ENCODE measurements at regions of chr9 and their contacts with region 1.

Region 1: DNA sequence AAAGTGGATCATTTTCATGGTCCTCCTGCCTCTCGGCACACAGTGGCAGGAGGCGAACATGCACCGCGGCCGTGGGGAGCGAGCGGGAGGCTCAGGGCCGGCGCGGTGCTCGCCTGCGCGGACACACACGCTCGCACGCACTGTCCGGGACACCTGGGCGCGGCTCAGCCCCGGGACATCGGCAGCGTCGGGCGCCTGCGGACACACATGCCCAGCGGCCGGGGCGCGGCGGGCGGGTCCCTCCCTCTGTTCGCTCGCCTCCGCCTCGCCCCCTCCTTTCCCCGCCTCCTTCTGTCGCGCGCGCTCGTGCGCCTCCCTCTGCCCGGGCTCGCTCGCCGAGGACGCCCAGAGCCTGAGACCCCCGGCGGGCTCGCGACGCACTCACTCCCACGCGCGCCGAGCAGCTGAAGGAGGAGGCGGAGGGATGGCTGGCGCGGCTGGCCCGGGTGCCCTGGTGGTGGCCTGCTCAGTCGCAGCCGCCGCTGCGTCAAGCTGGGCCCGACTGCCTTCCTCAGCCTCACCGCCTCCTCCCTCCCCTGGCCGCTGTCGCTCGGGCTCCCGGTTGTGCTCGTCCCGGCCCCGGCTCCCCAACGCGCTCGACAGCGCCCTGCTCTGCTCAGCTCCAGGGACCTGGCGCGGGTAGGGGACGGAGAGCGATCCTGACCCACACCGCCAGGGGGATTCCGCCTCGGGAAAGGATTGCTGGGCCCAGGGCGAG is at the start of gene FRMD3:
- H3K4me3 Mint-ChIP-seq: peak within 1 kb of the TSS; percentile 84
- H3K27ac Mint-ChIP-seq: peak within 1 kb of the TSS; percentile 67
- H3K4me1 Mint-ChIP-seq: peaks cover 7% of the 10 kb centered on the region
- H3K27me3 Mint-ChIP-seq: peaks cover 42% of the 10 kb centered on the region

Region 2: DNA sequence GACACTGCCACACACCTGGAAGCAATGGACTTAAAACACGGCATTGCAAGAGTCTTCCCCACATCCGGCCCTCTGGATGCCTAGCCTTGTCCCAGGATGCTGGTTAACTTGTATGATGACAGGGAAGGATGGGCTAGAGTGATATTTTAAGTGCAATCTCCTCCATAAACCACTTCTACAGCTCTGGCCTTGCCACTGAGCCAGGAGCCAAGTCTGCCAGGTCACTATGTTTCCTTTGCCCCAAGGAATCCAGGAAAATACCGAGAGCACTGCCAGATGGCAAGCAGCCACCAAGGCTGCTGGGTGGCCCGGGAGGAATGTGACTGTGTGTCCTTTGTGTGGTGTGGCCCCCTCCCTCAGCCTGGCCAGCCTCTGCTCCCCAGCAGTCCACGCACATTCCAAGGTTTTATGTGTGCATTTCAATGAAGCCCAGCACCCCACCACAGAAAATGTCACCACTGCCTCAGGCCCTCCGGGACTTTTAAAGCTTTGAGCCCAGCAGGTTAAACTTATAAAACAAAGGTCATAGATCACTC is 106.2 kb before region 1 on chr9:
- intact Hi-C with region 1: loop called (anchors 10 kb)
- H3K4me3 Mint-ChIP-seq: no peak overlapping the region
- H3K27ac Mint-ChIP-seq: peak overlapping the region; percentile 66
- H3K4me1 Mint-ChIP-seq: peaks cover 49% of the 10 kb centered on the region
- H3K27me3 Mint-ChIP-seq: peaks cover 4% of the 10 kb centered on the region

Region 3: GRCh38 chr9:83473488-83473971 is 64.8 kb before region 1 on chr9:
- intact Hi-C with region 1: loop called (anchors 10 kb)
- H3K4me3 Mint-ChIP-seq: peak overlapping the region; percentile 71
- H3K27ac Mint-ChIP-seq: peak overlapping the region; percentile 86
- H3K4me1 Mint-ChIP-seq: peaks cover 43% of the 10 kb centered on the region
- H3K27me3 Mint-ChIP-seq: no peaks in the 10 kb centered on the region

Region 4: DNA sequence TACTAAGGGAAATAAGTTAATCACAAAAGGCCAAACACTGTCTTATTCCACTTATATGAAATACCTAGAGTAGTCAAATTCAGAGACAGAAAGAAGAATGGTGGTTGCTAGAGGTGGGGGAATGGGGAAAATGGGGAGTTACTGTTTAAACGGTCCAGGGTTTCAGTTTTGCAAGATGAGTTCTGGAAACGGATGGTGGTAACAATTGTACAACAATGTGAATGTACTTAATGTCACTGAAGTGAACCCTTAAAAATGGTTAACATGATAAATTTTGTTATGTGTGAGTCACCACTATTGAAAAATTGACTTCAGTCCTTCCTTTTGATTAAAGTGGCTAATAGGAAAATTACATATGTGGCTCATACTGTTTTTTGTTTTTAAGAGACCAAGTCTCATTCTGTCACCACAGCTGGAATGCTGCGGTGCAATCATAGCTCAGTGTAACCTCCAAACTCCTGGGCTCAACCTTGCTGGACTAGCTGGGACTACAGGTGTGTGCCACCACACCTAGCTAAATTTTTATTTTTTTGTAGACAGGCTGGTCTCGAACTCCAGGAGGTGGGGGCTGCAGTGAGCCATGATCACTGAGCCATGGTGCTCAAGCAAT is 160.8 kb after region 1 on chr9:
- intact Hi-C with region 1: no loop called
- H3K4me3 Mint-ChIP-seq: no peak overlapping the region
- H3K27ac Mint-ChIP-seq: no peak overlapping the region
- H3K4me1 Mint-ChIP-seq: peaks cover 51% of the 10 kb centered on the region
- H3K27me3 Mint-ChIP-seq: no peaks in the 10 kb centered on the region

Measured in dendritic cell treated with granulocyte-macrophage colony-stimulating factor and Interleukin-4, amounts not matched to agents 40 ng/mL and 50 ng/mL, for 4 days (primary cell).